Ovary (tissue), 10 donors: ENCODE measurements at regions of chr18 and their contacts with region 1.

Region 1: GRCh38 chr18:58180738-58181353 is 136.8 kb downstream of the NEDD4L start:
- DNase-seq: peak in 4 of 5 donors; percentile 41 to 65 (median 44)
- H3K4me3 ChIP-seq: no peak overlapping the region
- H3K27ac ChIP-seq: no peak overlapping the region
- H3K4me1 ChIP-seq: peaks cover 10% of the 10 kb centered on the region
- H3K27me3 ChIP-seq: no peaks in the 10 kb centered on the region
- CTCF ChIP-seq: peak; percentile 47 to 75 (median 72)
- EP300 ChIP-seq: no peak
- POLR2A ChIP-seq: no peak

Region 2: DNA sequence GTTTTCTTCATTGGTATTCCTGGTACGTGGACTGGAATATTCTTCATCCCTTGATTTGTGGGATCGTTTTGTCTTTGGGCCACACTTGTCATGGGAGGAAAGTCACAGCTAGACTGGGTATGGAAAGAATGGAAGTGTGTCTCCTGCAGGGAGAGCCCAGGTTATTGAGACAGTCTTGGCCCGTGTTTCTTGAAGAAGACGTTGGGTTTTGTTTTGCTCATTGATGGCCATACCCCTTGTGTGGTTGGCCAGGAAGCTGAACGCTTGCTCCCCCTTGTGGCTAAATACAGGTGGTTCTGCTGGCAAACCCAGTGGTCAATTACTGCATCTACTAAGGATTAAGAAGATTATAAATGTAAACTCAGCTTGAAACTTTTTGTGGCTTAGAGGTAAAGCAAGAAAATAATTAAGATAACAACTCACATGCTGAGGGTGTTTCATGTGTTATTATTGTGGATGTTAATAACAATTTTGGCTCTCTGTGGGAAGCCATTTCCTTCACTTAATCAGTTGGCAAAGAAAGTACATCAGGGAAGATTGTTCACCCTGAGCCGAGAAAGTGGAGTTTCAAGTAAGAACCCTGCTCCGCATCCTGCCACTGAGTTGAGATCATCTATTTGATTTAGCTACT is 45.0 kb before region 1 on chr18:
- intact Hi-C with region 1: no loop called
- DNase-seq: peak; percentile 42 to 68 (median 55)
- H3K4me3 ChIP-seq: no peak overlapping the region
- H3K27ac ChIP-seq: no peak overlapping the region
- H3K4me1 ChIP-seq: no peaks in the 10 kb centered on the region
- H3K27me3 ChIP-seq: no peaks in the 10 kb centered on the region
- CTCF ChIP-seq: peak; percentile 61 to 74 (median 68)
- EP300 ChIP-seq: no peak
- POLR2A ChIP-seq: no peak

Region 3: GRCh38 chr18:58231930-58232329 is 51.1 kb after region 1 on chr18:
- intact Hi-C with region 1: no loop called
- DNase-seq: no peak
- H3K4me3 ChIP-seq: no peak overlapping the region
- H3K27ac ChIP-seq: no peak overlapping the region
- H3K4me1 ChIP-seq: no peaks in the 10 kb centered on the region
- H3K27me3 ChIP-seq: no peaks in the 10 kb centered on the region
- CTCF ChIP-seq: no peak
- EP300 ChIP-seq: no peak
- POLR2A ChIP-seq: no peak

Region 4: GRCh38 chr18:58297198-58297597 is 116.4 kb after region 1 on chr18:
- intact Hi-C with region 1: no loop called
- DNase-seq: no peak
- H3K4me3 ChIP-seq: no peak overlapping the region
- H3K27ac ChIP-seq: no peak overlapping the region
- H3K4me1 ChIP-seq: no peaks in the 10 kb centered on the region
- H3K27me3 ChIP-seq: no peaks in the 10 kb centered on the region
- CTCF ChIP-seq: no peak
- EP300 ChIP-seq: no peak
- POLR2A ChIP-seq: no peak

Region 5: GRCh38 chr18:58493516-58494253 is 312.8 kb after region 1 on chr18:
- intact Hi-C with region 1: loop called in 2 of 4 experiments (anchors 10 kb)
- DNase-seq: peak; percentile 73 to 82 (median 80)
- H3K4me3 ChIP-seq: no peak overlapping the region
- H3K27ac ChIP-seq: peak overlapping the region in 1 of 2 donors; percentile 36
- H3K4me1 ChIP-seq: peaks cover 1% of the 10 kb centered on the region
- H3K27me3 ChIP-seq: no peaks in the 10 kb centered on the region
- CTCF ChIP-seq: peak; percentile 66 to 81 (median 77)
- EP300 ChIP-seq: no peak
- POLR2A ChIP-seq: no peak